Right ventricle myocardium inferior (tissue), 1 donor: ENCODE measurements at regions of chr11 and their contacts with region 1.

Region 1: DNA sequence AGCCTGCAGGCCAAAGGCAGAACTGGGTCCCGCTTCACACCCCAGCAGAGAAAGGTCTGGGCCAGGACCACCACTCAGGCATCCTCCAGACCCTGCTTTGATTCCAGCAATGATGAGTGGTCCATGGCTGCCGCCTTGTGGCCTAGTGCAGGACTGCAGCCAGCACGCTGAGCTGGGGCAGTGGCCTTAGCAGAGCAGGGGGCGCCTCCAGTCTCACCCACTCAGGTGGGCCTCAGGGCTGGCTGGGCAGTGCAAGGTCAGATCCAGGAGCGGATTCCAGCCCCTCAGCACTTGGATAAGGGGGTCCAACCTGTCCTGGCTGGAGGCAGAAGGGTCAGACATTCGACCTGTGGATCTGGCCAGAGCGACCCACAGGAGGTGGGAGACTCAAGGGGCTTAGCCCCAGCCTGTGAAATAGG is 9.6 kb upstream of the PDE2A start:
- DNase-seq: peak; percentile 81
- ATAC-seq: peak; percentile 40

Region 2: DNA sequence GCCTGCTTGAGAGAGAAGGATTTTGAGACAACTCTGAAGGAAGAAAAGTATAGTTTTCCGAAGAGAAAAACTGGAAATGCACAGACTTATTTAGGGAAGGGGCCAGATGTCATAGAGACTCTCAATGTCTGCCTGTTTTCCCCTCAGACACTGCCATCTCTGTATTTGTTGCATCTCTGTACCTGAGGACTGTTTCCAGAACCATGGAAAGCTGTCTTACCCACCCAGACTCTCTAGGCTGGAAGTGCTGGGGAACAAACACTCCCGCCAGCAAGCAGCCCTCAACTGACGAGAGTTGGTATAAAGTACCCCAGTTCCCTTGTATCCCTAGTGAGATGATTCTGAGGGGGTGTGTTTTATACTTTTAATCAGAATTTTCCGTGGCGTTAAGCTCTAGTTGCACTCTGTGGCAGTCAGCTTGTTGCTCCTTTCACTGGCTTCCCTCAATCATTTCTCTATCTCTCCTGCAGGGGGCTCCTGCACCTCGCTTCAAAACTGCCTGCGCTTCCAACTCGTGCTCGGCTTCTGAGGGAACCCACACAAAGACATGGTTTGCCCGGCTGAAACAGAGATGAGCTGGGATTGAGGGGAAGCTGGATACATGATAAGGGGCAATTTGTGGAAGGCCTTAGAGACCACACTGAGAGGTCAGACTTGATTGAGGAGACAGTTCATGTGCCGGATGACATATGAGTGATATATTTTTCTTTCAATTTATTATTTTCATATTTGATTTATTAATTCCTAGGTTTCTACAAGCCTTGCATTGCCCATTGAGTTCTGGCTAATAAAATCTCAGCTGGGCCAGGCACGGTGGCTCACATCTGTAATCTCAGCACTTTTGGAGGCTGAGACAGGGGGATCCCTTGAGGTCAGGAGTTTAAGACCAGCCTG is 212.5 kb before region 1 on chr11:
- intact Hi-C with region 1: loop called (anchors 5 kb)
- DNase-seq: peak; percentile 77
- ATAC-seq: peak; percentile 81

Region 3: DNA sequence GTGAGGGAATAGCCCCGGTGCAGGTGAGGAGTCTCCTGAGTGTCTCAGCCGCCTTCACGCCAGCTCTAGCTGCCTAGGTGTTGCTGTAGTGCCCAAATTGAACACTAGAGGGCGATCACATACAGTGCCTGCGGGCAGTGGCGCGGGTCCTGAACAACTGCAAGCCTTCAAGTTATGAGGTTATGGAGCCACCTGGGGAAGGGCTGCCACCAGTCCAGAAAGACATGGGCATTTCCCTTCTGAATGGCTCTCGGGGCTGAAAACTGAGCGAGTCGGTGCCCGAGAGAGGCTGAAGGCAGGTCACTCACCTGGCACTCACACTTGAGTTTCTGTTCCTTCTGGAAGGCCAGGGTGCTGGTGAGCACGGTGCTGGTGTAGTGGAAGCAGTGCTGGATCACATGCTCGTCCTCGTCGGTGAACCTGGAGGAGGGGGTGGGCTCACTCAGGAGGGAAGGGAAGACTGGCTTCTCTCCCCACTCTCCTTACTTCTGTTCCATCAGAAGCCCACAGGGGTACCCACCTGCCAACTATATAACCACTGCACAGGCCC is 98.0 kb before region 1 on chr11:
- intact Hi-C with region 1: loop called (anchors 2 kb)
- DNase-seq: peak; percentile 86
- ATAC-seq: peak; percentile 69

Region 4: GRCh38 chr11:72598906-72599305 is 84.9 kb before region 1 on chr11:
- intact Hi-C with region 1: no loop called
- DNase-seq: no peak
- ATAC-seq: peak; percentile 75